Panc1 (cell line): ENCODE measurements at regions of chr3 and their contacts with region 1.

Region 1: GRCh38 chr3:138347960-138348753 is at the start of gene MRAS:
- DNase-seq: no peak
- ATAC-seq: peak; percentile 89
- H3K4me3 ChIP-seq: peak within 1 kb of the TSS; percentile 68 to 87
- H3K27ac ChIP-seq: peak within 1 kb of the TSS; percentile 18; the same call in 1 of the 2 replicates
- H3K4me1 ChIP-seq: peaks cover 5% of the 10 kb centered on the region; the same call in 1 of the 2 replicates
- H3K27me3 ChIP-seq: no peaks in the 10 kb centered on the region
- CTCF ChIP-seq: peak; percentile 89
- total RNA-seq, gene MRAS: 14.2 TPM

Region 2: GRCh38 chr3:138263104-138263503 is 85.1 kb before region 1 on chr3:
- CTCF ChIA-PET with region 1: no interaction called
- POLR2A ChIA-PET with region 1: no interaction called
- in situ Hi-C with region 1: no loop called
- intact Hi-C with region 1: no loop called
- DNase-seq: no peak
- ATAC-seq: 0 out of 2 replicates have a peak, but pooled peaks have one; percentile 63
- H3K4me3 ChIP-seq: no peak overlapping the region
- H3K27ac ChIP-seq: no peak overlapping the region
- H3K4me1 ChIP-seq: no peaks in the 10 kb centered on the region
- H3K27me3 ChIP-seq: no peaks in the 10 kb centered on the region
- CTCF ChIP-seq: peak; percentile 39

Region 3: GRCh38 chr3:138284957-138285477 is 63.1 kb before region 1 on chr3:
- CTCF ChIA-PET with region 1: no interaction called
- POLR2A ChIA-PET with region 1: interaction called, 18 read pairs
- in situ Hi-C with region 1: no loop called
- intact Hi-C with region 1: no loop called
- DNase-seq: no peak
- ATAC-seq: no peak
- H3K4me3 ChIP-seq: no peak overlapping the region
- H3K27ac ChIP-seq: no peak overlapping the region
- H3K4me1 ChIP-seq: no peaks in the 10 kb centered on the region
- H3K27me3 ChIP-seq: no peaks in the 10 kb centered on the region
- CTCF ChIP-seq: peak; percentile 45

Region 4: DNA sequence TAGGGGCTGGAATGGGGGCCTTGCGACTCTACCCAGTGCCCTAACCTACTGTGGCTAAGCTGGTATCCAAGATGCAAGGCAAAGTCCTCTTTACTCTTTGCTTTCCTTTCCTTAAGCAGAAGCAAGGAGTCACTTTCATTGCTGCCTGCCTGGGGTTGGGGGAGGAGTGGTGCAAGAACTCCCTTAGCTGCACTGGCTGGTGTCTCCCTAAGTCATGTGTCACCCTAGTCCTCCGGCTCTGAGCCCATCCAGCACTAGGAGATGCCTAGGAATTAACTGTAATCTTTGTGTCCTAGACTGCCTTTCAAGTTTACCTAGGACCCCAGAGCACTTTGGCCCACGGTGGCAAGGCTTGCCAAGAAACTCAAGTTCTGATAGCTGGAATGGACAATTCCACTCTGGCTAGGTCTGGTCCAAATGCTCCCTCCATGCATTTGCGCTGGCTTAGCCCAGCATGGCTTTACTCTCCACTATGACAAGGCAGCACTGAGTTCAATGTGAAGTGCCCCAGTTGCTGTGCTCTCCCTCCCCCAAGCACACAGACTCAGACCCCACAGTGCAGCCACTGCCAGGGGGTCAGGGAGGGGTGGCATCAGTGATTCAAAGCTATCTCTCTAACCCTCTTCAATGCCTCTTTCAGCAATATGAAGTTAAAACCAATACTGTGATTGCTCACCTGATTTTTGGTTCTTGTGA is 145.0 kb after region 1 on chr3:
- CTCF ChIA-PET with region 1: interaction called, 3 read pairs
- POLR2A ChIA-PET with region 1: interaction called, 13 read pairs
- in situ Hi-C with region 1: no loop called
- intact Hi-C with region 1: no loop called
- DNase-seq: no peak
- ATAC-seq: no peak
- H3K4me3 ChIP-seq: no peak overlapping the region
- H3K27ac ChIP-seq: no peak overlapping the region
- H3K4me1 ChIP-seq: no peaks in the 10 kb centered on the region
- H3K27me3 ChIP-seq: no peaks in the 10 kb centered on the region
- CTCF ChIP-seq: no peak